ENCODE measurements at regions of chr5 and their contacts with region 1.

Region 1: DNA sequence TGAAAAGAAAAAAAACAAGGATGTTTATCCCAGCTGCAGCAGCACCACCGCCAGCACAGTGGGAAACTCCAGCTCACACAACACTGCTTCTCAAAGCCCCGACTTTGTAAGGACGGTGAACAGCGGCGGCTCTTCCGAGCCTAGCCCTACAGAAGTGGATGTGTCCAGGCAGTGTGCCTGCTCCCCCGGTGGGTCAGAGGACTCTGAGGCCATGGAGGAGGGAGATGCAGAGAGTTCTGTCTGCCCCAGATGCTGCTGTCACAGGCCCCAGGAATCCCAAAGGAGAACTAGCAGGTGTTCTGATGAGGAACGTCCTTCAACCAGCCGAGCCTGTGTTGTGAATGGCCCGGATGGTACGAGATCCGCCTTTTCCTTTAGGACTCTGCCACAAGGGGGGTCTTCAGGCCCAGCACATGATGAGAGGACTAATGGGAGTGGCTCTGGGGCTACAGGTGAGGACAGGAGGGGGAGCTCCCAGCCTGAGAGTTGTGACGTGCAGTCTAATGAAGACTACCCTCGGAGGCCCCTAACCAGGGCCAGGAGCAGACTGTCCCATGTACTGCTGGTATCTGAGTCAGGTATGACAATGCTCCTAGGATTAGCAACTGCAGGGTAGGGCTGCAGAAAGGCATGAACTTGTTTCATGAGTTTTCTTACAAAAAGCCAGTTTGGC is 43.7 kb downstream of the FBXO38 start:
- DNase-seq: no peak
- ATAC-seq: no peak
- H3K4me3 ChIP-seq: no peak overlapping the region
- H3K27ac ChIP-seq: no peak overlapping the region
- H3K4me1 ChIP-seq: no peaks in the 10 kb centered on the region
- H3K27me3 ChIP-seq: no peaks in the 10 kb centered on the region
- CTCF ChIP-seq: no peak
- POLR2A ChIP-seq: no peak
- RAD21 ChIP-seq: no peak

Region 2: GRCh38 chr5:148416921-148417320 is 10.6 kb before region 1 on chr5:
- CTCF ChIA-PET with region 1: no interaction called
- POLR2A ChIA-PET with region 1: interaction called, 3 read pairs
- dilution Hi-C with region 1: no loop called
- in situ Hi-C with region 1: no loop called
- intact Hi-C with region 1: loop called (anchors 1 kb)
- DNase-seq: no peak
- ATAC-seq: no peak
- H3K4me3 ChIP-seq: no peak overlapping the region
- H3K27ac ChIP-seq: no peak overlapping the region
- H3K4me1 ChIP-seq: no peaks in the 10 kb centered on the region
- H3K27me3 ChIP-seq: no peaks in the 10 kb centered on the region
- CTCF ChIP-seq: no peak
- POLR2A ChIP-seq: no peak
- RAD21 ChIP-seq: no peak